Ovary (tissue), 10 donors: ENCODE measurements at regions of chr18 and their contacts with region 1.

Region 1: DNA sequence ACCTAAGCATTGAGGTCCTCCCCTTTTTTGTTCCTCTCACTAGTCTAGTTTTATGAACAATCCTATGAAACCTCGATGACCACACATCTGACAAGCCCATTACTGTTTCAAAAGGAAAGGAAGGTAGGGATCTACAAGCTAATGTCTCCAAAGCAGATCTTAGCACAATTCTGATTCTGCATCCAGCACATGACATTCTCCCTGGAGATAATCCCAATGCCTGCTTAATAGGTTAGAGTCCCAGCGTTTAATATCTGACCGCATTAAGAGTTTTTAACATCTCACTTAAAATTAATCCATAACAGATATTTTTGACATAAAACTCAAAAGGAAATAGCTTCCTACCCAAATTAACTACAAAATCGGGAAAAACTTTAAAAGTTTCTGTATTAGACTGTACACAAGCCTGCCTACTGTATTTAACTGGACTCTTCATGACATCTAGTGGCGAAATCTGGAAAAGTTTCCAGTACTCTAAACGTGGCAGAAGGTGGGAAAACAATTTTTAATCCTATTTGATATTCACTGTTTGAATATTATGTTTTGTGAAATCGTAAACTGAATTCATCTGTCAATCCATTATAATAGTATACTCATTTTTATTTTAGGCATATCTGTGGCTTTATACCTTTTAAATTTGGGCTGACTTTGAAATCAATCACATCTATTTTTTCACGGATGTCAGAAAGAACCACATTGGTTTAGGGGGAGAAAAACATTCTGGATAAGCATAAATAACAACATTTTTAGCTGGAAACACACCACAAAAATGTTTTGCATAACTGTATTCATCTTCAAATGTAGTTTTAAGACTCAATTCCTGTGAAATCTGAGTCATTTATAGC is 62.4 kb downstream of the TXNL1 start:
- DNase-seq: no peak
- H3K4me3 ChIP-seq: no peak overlapping the region
- H3K27ac ChIP-seq: no peak overlapping the region
- H3K4me1 ChIP-seq: peaks cover 10% of the 10 kb centered on the region
- H3K27me3 ChIP-seq: no peaks in the 10 kb centered on the region
- CTCF ChIP-seq: peak; percentile 38 to 83 (median 74)
- EP300 ChIP-seq: no peak
- POLR2A ChIP-seq: no peak

Region 2: GRCh38 chr18:55234366-55235093 is 1341.5 kb before region 1 on chr18:
- intact Hi-C with region 1: loop called in 3 of 4 experiments (anchors 5 to 10 kb)
- DNase-seq: peak; percentile 67 to 86 (median 80)
- H3K4me3 ChIP-seq: no peak overlapping the region
- H3K27ac ChIP-seq: no peak overlapping the region
- H3K4me1 ChIP-seq: peaks cover 2% of the 10 kb centered on the region
- H3K27me3 ChIP-seq: no peaks in the 10 kb centered on the region
- CTCF ChIP-seq: peak; percentile 41 to 80 (median 68)
- EP300 ChIP-seq: no peak
- POLR2A ChIP-seq: no peak

Region 3: DNA sequence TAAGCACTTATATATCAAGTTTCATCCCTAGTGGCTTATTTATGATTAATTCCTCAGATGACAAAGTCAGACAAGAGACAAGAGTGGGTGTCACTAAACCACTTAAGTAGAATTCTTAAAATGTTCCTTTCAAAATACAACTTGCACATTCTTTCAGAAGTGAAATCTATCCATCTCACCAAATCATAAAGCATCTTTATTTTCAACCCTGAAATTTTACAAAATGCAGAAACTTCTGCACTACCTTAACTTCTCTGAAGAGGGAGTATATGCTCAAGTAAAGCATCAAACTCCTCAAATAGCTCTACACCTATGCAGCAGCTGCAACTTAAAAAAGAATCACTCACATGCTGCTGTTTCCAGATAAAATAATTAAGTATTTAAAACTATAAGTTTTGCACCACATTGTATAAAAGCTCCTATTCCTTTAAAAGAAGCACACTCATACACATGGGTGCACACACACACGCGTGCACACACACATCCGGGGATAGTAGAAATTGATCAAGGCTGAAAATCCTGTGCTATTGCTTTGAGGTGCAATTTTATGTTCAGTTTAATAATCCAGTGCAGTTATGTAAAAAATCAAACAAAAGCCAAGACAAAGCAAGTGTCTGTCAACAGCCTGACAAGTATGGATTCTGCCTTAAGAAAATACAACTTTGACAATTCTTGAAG is 1232.5 kb before region 1 on chr18:
- intact Hi-C with region 1: loop called in 1 of 4 experiments (anchors 10 kb)
- DNase-seq: no peak
- H3K4me3 ChIP-seq: no peak overlapping the region
- H3K27ac ChIP-seq: no peak overlapping the region
- H3K4me1 ChIP-seq: peaks cover 2% of the 10 kb centered on the region
- H3K27me3 ChIP-seq: no peaks in the 10 kb centered on the region
- CTCF ChIP-seq: peak; percentile 7 to 38 (median 32)
- EP300 ChIP-seq: no peak
- POLR2A ChIP-seq: no peak

Region 4: DNA sequence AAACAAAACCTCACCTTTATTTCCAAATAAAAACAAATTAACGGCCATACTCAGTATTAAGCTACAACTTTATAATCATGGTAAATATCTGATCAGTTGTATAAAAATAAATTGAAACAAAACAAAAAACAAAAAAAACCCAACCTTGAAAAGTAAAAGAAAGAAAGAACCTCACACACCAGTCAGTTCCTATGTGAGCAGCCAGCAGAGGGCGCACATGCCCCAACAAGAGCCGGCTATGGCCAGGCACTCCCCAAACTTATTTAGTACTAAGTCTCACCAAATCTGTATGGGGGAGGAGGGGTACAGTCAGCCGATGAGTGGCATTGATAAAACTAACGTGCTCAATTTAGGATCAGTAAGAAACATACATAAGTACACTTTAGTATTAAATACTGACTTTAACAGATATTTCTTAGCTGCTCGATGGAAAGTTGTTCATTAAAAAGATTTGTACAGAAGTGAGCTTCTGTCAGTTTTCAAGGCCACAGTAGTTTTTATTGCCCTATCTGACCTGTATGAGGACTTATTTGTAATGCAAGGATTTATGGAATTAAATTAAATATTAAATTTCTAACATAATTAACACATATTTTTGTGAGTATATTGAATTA is 1160.7 kb before region 1 on chr18:
- intact Hi-C with region 1: loop called in 2 of 4 experiments (anchors 5 to 10 kb)
- DNase-seq: peak; percentile 83 to 93 (median 92)
- H3K4me3 ChIP-seq: no peak overlapping the region
- H3K27ac ChIP-seq: no peak overlapping the region
- H3K4me1 ChIP-seq: peaks cover 2% of the 10 kb centered on the region
- H3K27me3 ChIP-seq: no peaks in the 10 kb centered on the region
- CTCF ChIP-seq: peak; percentile 57 to 89 (median 78)
- EP300 ChIP-seq: no peak
- POLR2A ChIP-seq: no peak

Region 5: GRCh38 chr18:55907453-55908175 is 668.4 kb before region 1 on chr18:
- intact Hi-C with region 1: no loop called
- DNase-seq: peak in 3 of 5 donors; percentile 20 to 43 (median 21)
- H3K4me3 ChIP-seq: no peak overlapping the region
- H3K27ac ChIP-seq: peak overlapping the region in 1 of 2 donors; percentile 19
- H3K4me1 ChIP-seq: no peaks in the 10 kb centered on the region
- H3K27me3 ChIP-seq: no peaks in the 10 kb centered on the region
- CTCF ChIP-seq: no peak
- EP300 ChIP-seq: no peak
- POLR2A ChIP-seq: no peak

Region 6: GRCh38 chr18:55998071-55998522 is 577.9 kb before region 1 on chr18:
- intact Hi-C with region 1: loop called in 1 of 4 experiments (anchors 10 kb)
- DNase-seq: peak in 2 of 5 donors; percentile 34 to 40
- H3K4me3 ChIP-seq: peak overlapping the region; percentile 10
- H3K27ac ChIP-seq: no peak overlapping the region
- H3K4me1 ChIP-seq: peaks cover 5% of the 10 kb centered on the region
- H3K27me3 ChIP-seq: no peaks in the 10 kb centered on the region
- CTCF ChIP-seq: no peak
- EP300 ChIP-seq: no peak
- POLR2A ChIP-seq: no peak